Posterior vena cava (tissue), 2 donors: ENCODE measurements at regions of chr17 and their contacts with region 1.

Region 1: DNA sequence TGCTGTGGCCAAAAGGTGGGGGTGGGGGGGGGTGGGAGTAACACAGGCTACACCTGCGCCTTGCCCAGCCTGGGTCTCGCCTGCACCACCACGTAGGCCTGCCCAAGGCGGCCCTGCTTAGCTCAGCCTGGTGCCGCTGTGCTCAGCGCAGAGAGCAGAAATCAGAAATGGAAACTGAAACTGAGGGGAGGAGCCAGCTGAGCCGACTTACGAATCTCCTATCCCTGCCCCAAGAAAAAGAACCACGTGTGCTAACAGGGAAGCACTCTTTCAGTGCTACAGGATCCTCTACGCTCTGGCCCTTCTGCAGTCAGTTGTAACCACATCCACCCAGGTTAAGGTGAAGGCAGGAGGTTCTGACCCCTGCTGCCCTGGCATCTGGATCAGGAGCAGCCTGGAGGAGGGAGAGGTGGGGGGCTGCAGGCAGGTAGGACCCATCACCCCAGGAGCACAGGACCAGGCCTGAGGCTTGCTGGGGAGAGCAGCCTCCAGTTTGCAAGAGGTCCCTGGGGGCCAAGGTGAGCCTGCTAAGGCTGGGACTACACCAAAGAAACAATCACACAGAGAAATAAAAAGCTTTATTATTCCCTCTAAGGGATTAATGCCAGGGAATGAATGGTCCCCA is at the start of gene DHX58:
- DNase-seq: no peak
- total RNA-seq, gene DHX58: 9.9 to 13.0 TPM

Region 2: GRCh38 chr17:41648411-41649195 is 464.1 kb before region 1 on chr17:
- intact Hi-C with region 1: no loop called
- DNase-seq: peak; percentile 95

Region 3: GRCh38 chr17:41966463-41967140 is 146.1 kb before region 1 on chr17 and contains the start of gene CNP:
- intact Hi-C with region 1: loop called (anchors 5 to 10 kb)
- DNase-seq: peak; percentile 98
- total RNA-seq, gene CNP: 53.6 to 53.9 TPM

Region 4: GRCh38 chr17:42019509-42020404 is 92.9 kb before region 1 on chr17 and contains the start of gene NKIRAS2:
- intact Hi-C with region 1: loop called in 1 of 2 experiments (anchors 10 kb)
- DNase-seq: peak; percentile 99
- total RNA-seq, gene NKIRAS2: 28.3 TPM

Region 5: DNA sequence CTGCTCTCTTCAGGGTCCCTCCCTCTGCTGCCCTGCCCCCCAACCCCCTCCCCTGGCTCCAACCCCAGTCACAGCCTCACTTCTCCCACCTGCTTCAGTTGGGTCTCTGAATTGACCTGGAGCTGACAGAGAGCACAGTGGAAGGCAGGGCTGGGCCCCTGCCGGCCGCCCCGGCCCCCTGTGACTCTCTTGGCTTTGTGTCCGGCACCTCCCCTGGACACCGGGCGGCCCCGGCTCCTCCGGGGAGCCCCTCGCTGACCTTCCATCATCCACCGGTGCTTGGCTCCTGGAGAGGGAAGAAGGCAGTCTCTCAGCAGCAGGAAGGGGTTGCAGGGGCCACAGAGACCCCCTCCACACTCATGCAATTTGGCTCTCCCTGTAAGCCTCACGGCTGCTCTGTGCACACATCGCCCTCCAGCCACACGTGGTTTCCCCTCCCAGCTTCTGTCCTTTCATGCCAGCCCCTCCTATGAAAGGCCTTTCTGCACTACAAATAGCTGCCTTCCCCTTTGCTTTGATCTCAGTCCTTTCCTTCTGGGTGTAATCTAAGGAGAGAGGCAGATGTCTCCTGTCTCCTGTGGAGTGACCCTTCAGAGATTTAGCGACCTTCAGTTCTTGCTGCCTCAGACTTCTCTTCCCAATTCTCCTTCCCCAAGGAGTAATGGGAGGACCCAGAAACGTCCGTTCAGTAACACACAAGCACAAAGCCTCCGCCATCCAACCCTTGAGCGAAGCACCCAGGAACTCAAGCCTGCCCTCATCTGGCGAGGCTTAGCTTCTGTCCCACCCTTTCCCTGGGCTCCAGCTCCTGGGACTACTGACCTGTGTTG is 84.5 kb before region 1 on chr17:
- intact Hi-C with region 1: loop called (anchors 5 to 10 kb)
- DNase-seq: no peak

Region 6: GRCh38 chr17:42078396-42079043 is 34.1 kb before region 1 on chr17:
- intact Hi-C with region 1: loop called in 1 of 2 experiments (anchors 2 kb)
- DNase-seq: no peak

Region 7: DNA sequence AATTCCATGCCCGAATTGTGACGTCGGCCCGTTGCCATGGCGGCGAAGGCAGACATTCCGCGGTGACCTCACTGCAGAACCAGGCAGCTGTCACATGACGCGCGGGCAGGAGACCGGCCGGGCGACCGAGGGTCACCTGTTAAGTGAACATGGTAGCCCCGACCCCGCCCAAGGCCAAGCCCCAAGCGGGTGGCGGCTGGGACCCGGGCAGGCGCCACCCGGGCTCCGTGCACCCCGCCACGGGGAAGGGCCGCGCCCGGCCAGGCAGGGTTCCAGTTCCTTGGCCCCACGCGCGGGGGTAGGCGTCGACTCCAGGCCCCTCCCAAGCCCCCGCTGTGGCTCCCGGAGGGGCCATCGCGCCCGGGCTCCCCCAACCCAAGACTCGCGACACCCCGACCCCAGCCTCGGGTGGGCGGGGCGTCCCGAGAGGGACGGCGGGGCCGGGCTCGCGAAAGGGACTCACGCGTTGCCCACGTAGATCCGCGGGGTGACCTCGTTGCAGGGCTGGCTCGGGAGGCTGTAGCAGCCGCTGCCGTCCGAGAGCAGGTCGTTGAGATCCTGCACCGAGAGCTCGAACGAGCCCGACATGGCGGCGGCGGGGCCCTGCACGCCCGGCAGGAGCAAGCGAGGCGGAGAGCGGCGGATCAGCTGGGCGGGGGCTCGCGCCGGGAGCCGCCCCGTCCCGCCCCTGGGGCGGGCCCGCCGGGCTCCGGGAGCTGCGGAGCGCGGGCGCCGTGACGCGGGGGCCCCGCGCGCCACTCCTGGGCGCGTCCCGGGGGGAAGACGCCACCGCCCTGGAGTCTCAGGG is 1665.9 kb after region 1 on chr17 and contains the start of gene DUSP3:
- intact Hi-C with region 1: no loop called
- DNase-seq: peak; percentile 99
- total RNA-seq, gene DUSP3: 169 to 172 TPM